ENCODE measurements at regions of chr1 and their contacts with region 1.

Region 1: GRCh38 chr1:190599688-190600087 is 122.0 kb upstream of the BRINP3 start:
- DNase-seq: no peak
- CTCF ChIP-seq: no peak

Region 2: DNA sequence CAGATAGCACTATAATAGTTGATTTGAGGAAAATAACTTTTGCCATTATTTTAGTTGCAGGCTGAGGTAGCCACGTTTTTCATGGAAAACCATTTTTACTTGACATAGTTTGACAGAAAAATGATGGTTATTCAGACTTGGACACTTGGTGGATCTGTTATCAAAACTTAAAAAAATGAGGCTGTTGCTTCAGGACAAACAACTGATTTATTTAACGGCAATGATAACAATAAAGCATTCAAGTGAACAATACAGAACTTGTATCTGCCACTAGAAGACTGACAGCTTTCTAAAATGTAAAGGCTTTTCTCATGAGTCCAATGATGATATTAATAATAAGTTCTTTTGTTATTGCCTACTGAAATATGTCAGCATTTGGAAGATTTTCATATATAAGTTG is 444.9 kb before region 1 on chr1:
- CTCF ChIA-PET with region 1: no interaction called
- POLR2A ChIA-PET with region 1: no interaction called
- DNase-seq: no peak
- CTCF ChIP-seq: no peak

Region 3: DNA sequence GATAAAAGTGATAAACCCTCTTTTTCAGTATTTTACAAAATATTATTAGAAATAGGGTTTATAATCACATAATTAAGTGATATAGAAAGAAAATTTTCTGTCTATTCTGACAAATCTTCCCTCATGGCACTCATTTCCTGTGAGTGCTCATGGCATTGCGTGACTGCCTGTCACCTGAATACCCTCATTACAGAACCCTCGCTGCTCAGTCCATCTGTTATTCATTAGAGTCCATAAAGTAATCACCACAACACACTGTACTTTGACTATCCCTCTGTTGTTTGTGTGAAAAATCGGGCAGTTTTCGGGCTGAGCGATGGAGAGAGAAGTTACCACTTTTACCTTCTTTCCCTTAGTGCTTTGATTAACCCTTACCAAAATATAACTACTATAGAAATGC is 21.7 kb before region 1 on chr1:
- CTCF ChIA-PET with region 1: no interaction called
- POLR2A ChIA-PET with region 1: no interaction called
- DNase-seq: no peak
- CTCF ChIP-seq: no peak

Region 4: GRCh38 chr1:190588424-190588823 is 11.3 kb before region 1 on chr1:
- CTCF ChIA-PET with region 1: interaction called, 11 read pairs
- POLR2A ChIA-PET with region 1: no interaction called
- DNase-seq: no peak
- CTCF ChIP-seq: no peak

Measured in GM10248 (cell line).